CD8-positive, alpha-beta T cell (primary cell): ENCODE measurements at regions of chr10 and their contacts with region 1.

Region 1: DNA sequence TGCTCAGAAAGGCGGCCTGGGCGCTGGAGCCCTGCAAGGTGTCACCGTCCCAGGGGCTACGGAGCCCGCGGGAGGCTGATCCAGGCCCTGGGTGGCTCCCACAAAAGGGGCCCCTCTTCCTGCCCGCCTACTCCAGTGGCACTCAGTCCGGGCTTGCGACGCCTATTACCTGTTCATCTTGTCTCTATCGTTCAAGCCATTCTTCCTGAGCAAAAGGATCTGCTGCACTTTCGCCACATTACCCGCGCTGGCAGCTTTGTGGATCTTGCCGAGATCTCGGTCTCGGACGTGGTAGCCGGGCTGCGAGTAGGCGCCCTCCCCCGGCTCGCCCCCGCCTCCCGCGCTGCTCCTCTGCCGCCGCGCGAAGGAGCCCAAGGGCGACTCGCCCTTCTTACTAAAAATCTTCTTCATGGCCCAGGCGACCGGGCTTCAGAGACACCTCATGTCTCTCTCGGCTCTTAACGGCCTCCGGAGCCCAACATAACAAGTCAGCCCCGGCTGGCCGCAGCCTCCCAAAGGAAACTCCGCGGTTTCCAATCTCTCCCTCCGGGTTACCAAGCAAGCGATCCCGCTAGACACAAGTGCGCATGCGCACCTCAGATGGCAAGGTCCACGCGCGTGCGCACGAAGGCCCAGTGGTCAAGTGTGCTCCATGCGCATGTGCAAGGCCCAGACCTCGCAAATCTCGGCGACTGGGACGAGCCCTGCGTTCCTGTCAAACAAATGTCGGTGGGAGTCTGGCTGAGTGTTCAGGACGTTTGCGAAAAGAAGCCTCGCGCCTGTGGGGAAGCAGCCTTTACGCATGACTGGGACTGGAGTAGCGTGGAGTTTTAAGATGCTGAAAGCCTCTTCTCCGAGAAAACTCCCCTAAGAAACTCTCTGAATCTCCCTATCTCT is at the start of gene ANKRD26:
- DNase-seq: peak; percentile 88 to 99 (median 97)
- ATAC-seq: peak; percentile 53
- H3K4me3 ChIP-seq: peak within 1 kb of the TSS; percentile 84
- H3K4me3 Mint-ChIP-seq: peak within 1 kb of the TSS; percentile 93
- H3K27ac ChIP-seq: peak within 1 kb of the TSS; percentile 70 to 94
- H3K27ac Mint-ChIP-seq: peak within 1 kb of the TSS; percentile 95
- H3K4me1 ChIP-seq: peaks cover 35% of the 10 kb centered on the region
- H3K4me1 Mint-ChIP-seq: peaks cover 51% of the 10 kb centered on the region
- H3K27me3 ChIP-seq: no peaks in the 10 kb centered on the region
- H3K27me3 Mint-ChIP-seq: no peaks in the 10 kb centered on the region
- CTCF ChIP-seq: no peak
- total RNA-seq, gene ANKRD26: 4.0 to 4.7 TPM

Region 2: GRCh38 chr10:26486991-26487850 is 612.9 kb before region 1 on chr10:
- CTCF ChIA-PET with region 1: no interaction called
- POLR2A ChIA-PET with region 1: no interaction called
- intact Hi-C with region 1: loop called in 1 of 2 experiments (anchors 10 kb)
- DNase-seq: peak; percentile 16 to 92 (median 69)
- ATAC-seq: peak; percentile 75
- H3K4me3 ChIP-seq: peak overlapping the region in 1 of 2 experiments; percentile 2
- H3K4me3 Mint-ChIP-seq: peak overlapping the region; percentile 66
- H3K27ac ChIP-seq: peak overlapping the region; percentile 73 to 91
- H3K27ac Mint-ChIP-seq: peak overlapping the region; percentile 97
- H3K4me1 ChIP-seq: peaks cover 66% of the 10 kb centered on the region
- H3K4me1 Mint-ChIP-seq: peaks cover 71% of the 10 kb centered on the region
- H3K27me3 ChIP-seq: no peaks in the 10 kb centered on the region
- H3K27me3 Mint-ChIP-seq: no peaks in the 10 kb centered on the region
- CTCF ChIP-seq: no peak

Region 3: DNA sequence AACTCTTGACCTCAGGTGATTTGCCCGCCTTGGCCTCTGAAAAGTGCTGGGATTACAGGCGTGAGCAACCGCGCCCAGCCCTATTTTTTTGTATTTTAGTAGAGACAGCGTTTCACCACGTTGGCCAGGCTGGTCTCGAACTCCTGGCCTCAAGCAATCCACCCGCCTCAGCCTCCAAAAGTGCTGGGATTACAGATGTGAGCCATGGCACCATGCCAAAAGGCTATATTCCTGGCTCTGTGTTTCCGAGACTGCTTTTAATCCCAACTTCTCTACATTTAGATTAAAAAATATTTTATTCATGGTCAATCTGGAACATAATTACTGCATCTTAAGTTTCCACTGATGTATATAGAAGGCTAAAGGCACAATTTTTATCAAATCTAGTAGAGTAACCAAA is 11.1 kb after region 1 on chr10:
- CTCF ChIA-PET with region 1: no interaction called
- POLR2A ChIA-PET with region 1: interaction called, 5 read pairs
- intact Hi-C with region 1: loop called in 1 of 2 experiments (anchors 2 kb)
- DNase-seq: no peak
- ATAC-seq: no peak
- H3K4me3 ChIP-seq: no peak overlapping the region
- H3K4me3 Mint-ChIP-seq: no peak overlapping the region
- H3K27ac ChIP-seq: no peak overlapping the region
- H3K27ac Mint-ChIP-seq: no peak overlapping the region
- H3K4me1 ChIP-seq: no peaks in the 10 kb centered on the region
- H3K4me1 Mint-ChIP-seq: no peaks in the 10 kb centered on the region
- H3K27me3 ChIP-seq: no peaks in the 10 kb centered on the region
- H3K27me3 Mint-ChIP-seq: no peaks in the 10 kb centered on the region
- CTCF ChIP-seq: no peak

Region 4: DNA sequence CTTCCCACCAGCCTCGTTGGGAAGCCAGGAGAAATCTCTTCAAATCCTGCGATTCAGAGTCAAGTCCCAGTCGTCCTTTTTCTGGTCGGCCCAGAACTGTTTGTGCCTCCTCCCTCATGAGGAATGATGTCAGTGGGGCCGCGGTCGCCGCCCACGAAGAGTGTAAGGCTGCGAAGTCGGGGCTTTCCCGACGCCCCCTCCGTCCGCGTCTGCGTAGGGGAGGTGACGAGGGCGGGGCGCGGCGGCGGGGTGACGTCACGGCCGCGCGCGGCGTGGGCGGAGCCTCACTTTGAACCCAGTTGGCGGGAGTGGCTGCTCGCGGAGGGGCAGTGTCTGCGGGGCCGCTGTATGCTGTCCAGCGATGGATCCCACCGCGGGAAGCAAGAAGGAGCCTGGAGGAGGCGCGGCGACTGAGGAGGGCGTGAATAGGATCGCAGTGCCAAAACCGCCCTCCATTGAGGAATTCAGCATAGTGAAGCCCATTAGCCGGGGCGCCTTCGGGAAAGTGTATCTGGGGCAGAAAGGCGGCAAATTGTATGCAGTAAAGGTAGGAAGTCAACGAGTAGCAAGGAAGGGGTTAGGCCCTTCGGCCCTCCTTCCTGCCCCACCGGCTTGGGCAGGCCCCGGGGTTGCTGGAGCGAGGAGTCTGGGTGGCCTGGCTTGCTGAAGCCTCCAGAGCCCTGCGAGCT is 55.0 kb after region 1 on chr10 and contains the start of gene MASTL:
- CTCF ChIA-PET with region 1: interaction called, 5 read pairs
- POLR2A ChIA-PET with region 1: interaction called, 21 read pairs
- intact Hi-C with region 1: loop called (anchors 1 kb)
- DNase-seq: peak; percentile 90 to 98 (median 93)
- ATAC-seq: peak; percentile 82
- H3K4me3 ChIP-seq: peak within 1 kb of the TSS; percentile 84 to 98
- H3K4me3 Mint-ChIP-seq: peak within 1 kb of the TSS; percentile 99
- H3K27ac ChIP-seq: peak within 1 kb of the TSS; percentile 100
- H3K27ac Mint-ChIP-seq: peak within 1 kb of the TSS; percentile 100
- H3K4me1 ChIP-seq: peaks cover 27% of the 10 kb centered on the region
- H3K4me1 Mint-ChIP-seq: peaks cover 49% of the 10 kb centered on the region
- H3K27me3 ChIP-seq: no peaks in the 10 kb centered on the region
- H3K27me3 Mint-ChIP-seq: no peaks in the 10 kb centered on the region
- CTCF ChIP-seq: no peak
- total RNA-seq, gene MASTL: 33.4 to 33.6 TPM